Vagina (tissue), 2 donors: ENCODE measurements at regions of chr12 and their contacts with region 1.

Region 1: DNA sequence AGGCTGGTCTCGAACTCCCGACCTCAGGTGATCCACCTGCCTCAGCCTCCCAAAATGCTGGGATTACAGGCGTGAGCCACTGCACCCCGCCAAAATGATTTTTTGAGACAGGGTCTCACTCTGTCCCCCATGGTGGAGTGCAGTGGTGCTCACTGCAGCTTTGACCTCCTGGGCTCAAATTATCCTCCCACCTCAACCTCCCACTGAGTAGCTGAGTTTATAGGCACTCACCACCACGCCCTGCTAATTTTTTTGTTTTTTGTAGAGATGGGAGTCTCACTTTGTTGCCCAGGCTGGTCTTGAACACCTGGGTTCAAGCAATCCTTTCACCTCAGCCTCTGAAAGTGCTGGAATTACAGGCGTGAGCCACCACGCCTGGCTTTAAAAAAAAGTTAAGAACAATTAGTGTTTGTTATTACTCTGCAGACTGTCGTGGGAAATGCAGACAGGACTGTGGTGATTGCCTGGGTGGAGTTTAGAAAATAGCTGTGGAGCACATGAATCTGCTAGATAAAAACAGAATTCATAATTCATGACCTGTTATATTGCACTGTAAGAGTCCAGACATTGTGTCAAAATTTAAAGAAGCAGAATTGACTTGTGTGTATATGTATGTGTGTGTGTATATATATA is 9.2 kb upstream of the COX6A1 start:
- DNase-seq: no peak
- H3K4me3 ChIP-seq: no peak overlapping the region
- H3K27ac ChIP-seq: no peak overlapping the region
- H3K4me1 ChIP-seq: no peaks in the 10 kb centered on the region
- H3K27me3 ChIP-seq: no peaks in the 10 kb centered on the region
- CTCF ChIP-seq: no peak
- POLR2A ChIP-seq: no peak

Region 2: DNA sequence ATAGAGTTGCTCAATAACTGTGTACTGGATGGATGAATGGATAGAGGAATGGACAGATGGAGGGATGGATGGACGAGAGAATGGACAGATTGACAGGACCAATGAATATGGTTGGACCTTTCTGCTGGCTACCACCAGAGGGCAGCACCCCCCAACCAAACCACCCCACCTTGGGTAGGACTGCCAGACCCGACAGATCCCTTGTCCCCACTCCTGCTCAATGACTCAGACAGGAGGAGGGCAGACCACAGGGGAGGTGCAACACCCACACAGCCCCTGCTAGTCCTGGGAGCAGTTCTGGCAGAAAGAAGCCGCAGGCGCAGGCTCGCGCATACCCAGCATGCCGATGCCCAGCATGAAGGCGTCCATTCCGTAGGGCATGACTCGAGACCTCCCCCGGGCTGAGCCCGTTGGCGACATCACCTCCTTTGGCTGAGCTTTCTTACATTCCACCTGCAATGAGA is 72.1 kb before region 1 on chr12:
- intact Hi-C with region 1: loop called (anchors 5 kb)
- DNase-seq: no peak
- H3K4me3 ChIP-seq: no peak overlapping the region
- H3K27ac ChIP-seq: no peak overlapping the region
- H3K4me1 ChIP-seq: peaks cover 5% of the 10 kb centered on the region
- H3K27me3 ChIP-seq: no peaks in the 10 kb centered on the region
- CTCF ChIP-seq: peak; percentile 69 to 86 (median 84)
- POLR2A ChIP-seq: no peak

Region 3: GRCh38 chr12:120598674-120599463 is 170.2 kb after region 1 on chr12:
- intact Hi-C with region 1: no loop called
- DNase-seq: no peak
- H3K4me3 ChIP-seq: no peak overlapping the region
- H3K27ac ChIP-seq: no peak overlapping the region
- H3K4me1 ChIP-seq: no peaks in the 10 kb centered on the region
- H3K27me3 ChIP-seq: no peaks in the 10 kb centered on the region
- CTCF ChIP-seq: no peak
- POLR2A ChIP-seq: no peak